Activated CD8-positive, alpha-beta T cell treated with anti-CD3 and anti-CD28 coated beads for 36 hours (primary cell): ENCODE measurements at regions of chr3 and their contacts with region 1.

Region 1: GRCh38 chr3:183555541-183556081 is at the start of gene KLHL6:
- DNase-seq: peak; percentile 89
- ATAC-seq: peak; percentile 86
- H3K4me3 Mint-ChIP-seq: peak within 1 kb of the TSS; percentile 94
- H3K27ac Mint-ChIP-seq: peak within 1 kb of the TSS; percentile 99
- H3K4me1 Mint-ChIP-seq: peaks cover 48% of the 10 kb centered on the region
- H3K27me3 Mint-ChIP-seq: no peaks in the 10 kb centered on the region
- CTCF ChIP-seq: no peak
- total RNA-seq, gene KLHL6: 32.4 to 32.6 TPM

Region 2: DNA sequence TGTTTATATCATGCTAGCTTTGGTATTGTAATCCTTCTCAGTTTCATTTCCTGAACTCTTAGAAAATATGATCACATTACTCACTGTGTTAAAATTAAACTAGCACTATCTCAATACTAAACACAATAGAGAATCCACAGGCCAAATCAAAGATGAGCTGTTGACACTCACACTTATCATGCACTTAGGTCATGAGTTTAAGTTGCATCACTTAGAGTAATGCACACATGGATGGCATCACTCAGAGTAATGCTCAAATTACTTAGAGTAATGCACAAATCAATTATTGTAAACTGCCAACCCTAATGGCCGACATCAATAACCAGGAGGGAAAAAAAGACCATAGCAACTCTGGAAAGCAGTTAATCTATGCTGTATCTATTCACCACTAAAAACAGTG is 87.2 kb before region 1 on chr3:
- CTCF ChIA-PET with region 1: interaction called, 4 read pairs
- POLR2A ChIA-PET with region 1: no interaction called
- intact Hi-C with region 1: loop called (anchors 2 kb)
- DNase-seq: no peak
- ATAC-seq: peak; percentile 59
- H3K4me3 Mint-ChIP-seq: no peak overlapping the region
- H3K27ac Mint-ChIP-seq: peak overlapping the region; percentile 86
- H3K4me1 Mint-ChIP-seq: peaks cover 20% of the 10 kb centered on the region
- H3K27me3 Mint-ChIP-seq: peaks cover 1% of the 10 kb centered on the region
- CTCF ChIP-seq: no peak

Region 3: DNA sequence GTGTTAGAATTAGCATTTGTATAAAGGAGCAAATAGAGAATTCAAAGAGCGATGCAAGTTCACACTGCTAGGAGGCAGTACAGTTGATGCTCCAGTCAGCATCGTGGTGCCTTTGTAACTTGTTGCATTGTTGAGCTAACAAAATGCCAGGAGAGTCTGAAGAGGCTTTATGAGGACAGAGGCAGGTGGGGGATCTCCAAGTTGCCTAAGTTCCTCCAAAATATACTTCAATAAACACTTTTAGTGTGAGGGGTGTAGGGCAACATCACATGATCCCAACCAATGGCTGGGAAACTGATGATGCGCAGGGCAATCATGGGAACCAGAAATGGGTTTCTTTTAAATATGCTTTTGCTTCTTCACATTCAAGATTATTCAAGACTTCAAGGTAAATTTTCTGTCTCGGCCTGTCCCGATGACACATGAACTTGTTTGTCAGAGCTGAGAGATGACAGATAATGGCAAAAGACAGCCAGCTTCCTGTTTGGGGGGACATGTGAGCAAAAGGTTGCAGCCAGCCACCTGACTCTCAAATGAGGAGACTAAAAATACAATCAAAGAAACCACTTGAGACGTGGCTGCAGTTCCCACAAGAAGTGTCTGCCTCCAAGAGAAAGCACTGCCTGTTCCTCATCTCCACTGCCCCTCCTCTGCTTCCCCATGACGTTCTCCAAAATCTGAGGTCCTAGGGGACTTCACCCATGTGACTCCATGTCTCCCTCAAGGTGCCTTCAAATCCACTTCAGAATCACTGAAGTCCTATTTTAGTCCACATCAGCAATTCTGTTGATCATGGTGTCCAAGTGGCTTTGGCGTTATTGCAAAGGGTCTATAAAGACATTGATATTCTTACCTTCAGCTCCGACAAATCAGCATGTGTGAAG is 39.4 kb before region 1 on chr3:
- CTCF ChIA-PET with region 1: interaction called, 3 read pairs
- POLR2A ChIA-PET with region 1: interaction called, 40 read pairs
- intact Hi-C with region 1: loop called (anchors 2 kb)
- DNase-seq: peak; percentile 77
- ATAC-seq: peak; percentile 80
- H3K4me3 Mint-ChIP-seq: no peak overlapping the region
- H3K27ac Mint-ChIP-seq: peak overlapping the region; percentile 92
- H3K4me1 Mint-ChIP-seq: peaks cover 71% of the 10 kb centered on the region
- H3K27me3 Mint-ChIP-seq: no peaks in the 10 kb centered on the region
- CTCF ChIP-seq: no peak

Region 4: GRCh38 chr3:183591881-183592521 is 36.4 kb after region 1 on chr3:
- CTCF ChIA-PET with region 1: interaction called, 10 read pairs
- POLR2A ChIA-PET with region 1: no interaction called
- intact Hi-C with region 1: no loop called
- DNase-seq: no peak
- ATAC-seq: peak; percentile 37
- H3K4me3 Mint-ChIP-seq: peak overlapping the region; percentile 19
- H3K27ac Mint-ChIP-seq: peak overlapping the region; percentile 62
- H3K4me1 Mint-ChIP-seq: peaks cover 14% of the 10 kb centered on the region
- H3K27me3 Mint-ChIP-seq: no peaks in the 10 kb centered on the region
- CTCF ChIP-seq: peak; percentile 26

Region 5: GRCh38 chr3:183635431-183636220 is 80.0 kb after region 1 on chr3 and contains the start of gene KLHL24:
- CTCF ChIA-PET with region 1: no interaction called
- POLR2A ChIA-PET with region 1: interaction called, 7 read pairs
- intact Hi-C with region 1: loop called (anchors 5 kb)
- DNase-seq: peak; percentile 95
- ATAC-seq: peak; percentile 78
- H3K4me3 Mint-ChIP-seq: peak within 1 kb of the TSS; percentile 87
- H3K27ac Mint-ChIP-seq: peak within 1 kb of the TSS; percentile 94
- H3K4me1 Mint-ChIP-seq: peaks cover 35% of the 10 kb centered on the region
- H3K27me3 Mint-ChIP-seq: no peaks in the 10 kb centered on the region
- CTCF ChIP-seq: no peak
- total RNA-seq, gene KLHL24: 10.5 to 10.8 TPM